ENCODE measurements at regions of chrX and their contacts with region 1.

Region 1: GRCh38 chrX:129606918-129607317 is 47.8 kb downstream of the APLN start:
- DNase-seq: no peak
- H3K4me3 ChIP-seq: no peak overlapping the region
- H3K27ac ChIP-seq: no peak overlapping the region
- H3K4me1 ChIP-seq: peaks cover 4 to 26% (median 12%) of the 10 kb centered on the region in 4 donors
- H3K27me3 ChIP-seq: no peaks in the 10 kb centered on the region
- CTCF ChIP-seq: peak; percentile 64 to 88 (median 75)
- EP300 ChIP-seq: no peak
- POLR2A ChIP-seq: no peak

Region 2: DNA sequence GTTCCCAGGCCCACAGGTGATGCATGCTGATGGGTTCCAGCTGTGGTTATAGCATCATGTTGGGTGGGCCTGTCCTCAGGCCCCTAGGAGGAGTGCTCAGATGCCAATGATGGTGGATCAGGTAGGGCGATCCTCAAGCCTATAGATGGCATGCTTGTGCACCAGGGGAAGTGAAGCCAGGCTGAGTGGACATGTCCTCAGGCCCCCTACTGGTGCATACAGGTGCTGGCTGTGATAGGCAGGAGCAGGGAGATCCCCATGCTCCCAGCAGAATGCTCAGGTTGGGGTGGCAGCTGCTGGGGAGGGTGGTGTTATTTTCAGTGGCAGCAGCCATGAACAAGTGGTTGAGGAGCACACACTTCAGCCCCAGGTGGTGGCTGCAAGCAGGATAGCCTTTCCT is 179.7 kb before region 1 on chrX:
- intact Hi-C with region 1: no loop called
- DNase-seq: no peak
- H3K4me3 ChIP-seq: no peak overlapping the region
- H3K27ac ChIP-seq: no peak overlapping the region
- H3K4me1 ChIP-seq: no peaks in the 10 kb centered on the region
- H3K27me3 ChIP-seq: no peaks in the 10 kb centered on the region
- CTCF ChIP-seq: no peak
- EP300 ChIP-seq: no peak
- POLR2A ChIP-seq: no peak

Region 3: GRCh38 chrX:129726307-129727111 is 119.6 kb after region 1 on chrX:
- intact Hi-C with region 1: loop called (anchors 2 kb)
- DNase-seq: no peak
- H3K4me3 ChIP-seq: no peak overlapping the region
- H3K27ac ChIP-seq: no peak overlapping the region
- H3K4me1 ChIP-seq: no peaks in the 10 kb centered on the region
- H3K27me3 ChIP-seq: peaks cover 0 to 3% (median 0%) of the 10 kb centered on the region in 4 donors
- CTCF ChIP-seq: peak; percentile 68 to 72 (median 69)
- EP300 ChIP-seq: no peak
- POLR2A ChIP-seq: no peak

Region 4: GRCh38 chrX:130055103-130055502 is 448.2 kb after region 1 on chrX:
- intact Hi-C with region 1: loop called (anchors 10 kb)
- DNase-seq: no peak
- H3K4me3 ChIP-seq: no peak overlapping the region
- H3K27ac ChIP-seq: peak overlapping the region; percentile 51 to 61 (median 57)
- H3K4me1 ChIP-seq: peaks cover 0 to 39% (median 31%) of the 10 kb centered on the region in 4 donors
- H3K27me3 ChIP-seq: no peaks in the 10 kb centered on the region
- CTCF ChIP-seq: no peak
- EP300 ChIP-seq: no peak
- POLR2A ChIP-seq: no peak

Region 5: GRCh38 chrX:130196466-130196865 is 589.5 kb after region 1 on chrX:
- intact Hi-C with region 1: loop called (anchors 10 kb)
- DNase-seq: no peak
- H3K4me3 ChIP-seq: no peak overlapping the region
- H3K27ac ChIP-seq: no peak overlapping the region
- H3K4me1 ChIP-seq: no peaks in the 10 kb centered on the region
- H3K27me3 ChIP-seq: no peaks in the 10 kb centered on the region
- CTCF ChIP-seq: no peak
- EP300 ChIP-seq: no peak
- POLR2A ChIP-seq: no peak

Measured in esophagus muscularis mucosa (tissue), 4 donors.